ENCODE measurements at regions of chr1 and their contacts with region 1.

Region 1: GRCh38 chr1:223244366-223245103 is 101.5 kb upstream of the TLR5 start:
- DNase-seq: peak; percentile 30
- ATAC-seq: peak; percentile 93
- H3K4me3 ChIP-seq: no peak overlapping the region
- H3K27ac ChIP-seq: no peak overlapping the region
- H3K4me1 ChIP-seq: no peaks in the 10 kb centered on the region
- H3K27me3 ChIP-seq: no peaks in the 10 kb centered on the region; a peak in 1 of 4 replicates
- CTCF ChIP-seq: peak; percentile 46 to 84 (median 59); a peak in 5 of 6 replicates
- EP300 ChIP-seq: peak; percentile 22 to 58; a peak in 2 of 4 replicates
- POLR2A ChIP-seq: no peak
- RAD21 ChIP-seq: peak; percentile 66

Region 2: DNA sequence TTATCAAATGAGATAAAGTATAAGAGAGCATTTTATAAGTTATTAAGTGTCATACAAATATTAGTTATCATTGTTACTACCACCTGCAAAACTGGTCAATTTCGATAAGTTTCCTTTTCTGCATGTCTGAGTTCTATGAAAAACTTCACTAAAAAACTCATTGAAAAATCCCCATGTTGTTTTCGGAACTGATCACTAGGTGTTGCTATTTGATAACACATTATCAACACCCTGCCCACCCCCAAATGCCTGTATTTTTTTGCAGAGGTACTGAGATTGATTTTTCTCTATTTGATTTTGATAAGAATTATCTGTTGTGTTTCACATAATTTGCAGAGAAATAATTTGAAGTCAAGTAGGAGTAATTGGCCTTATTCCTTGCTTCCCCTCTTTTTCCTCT is 451.8 kb before region 1 on chr1:
- CTCF ChIA-PET with region 1: no interaction called
- POLR2A ChIA-PET with region 1: interaction called, 4 read pairs
- RAD21 ChIA-PET with region 1: no interaction called
- SMC1A ChIA-PET with region 1: no interaction called
- in situ Hi-C with region 1: no loop called
- intact Hi-C with region 1: loop called (anchors 5 kb)
- DNase-seq: no peak
- ATAC-seq: 0 out of 3 replicates have a peak, but pooled peaks have one; percentile 29
- H3K4me3 ChIP-seq: no peak overlapping the region
- H3K27ac ChIP-seq: no peak overlapping the region
- H3K4me1 ChIP-seq: no peaks in the 10 kb centered on the region
- H3K27me3 ChIP-seq: no peaks in the 10 kb centered on the region; a peak in 1 of 4 replicates
- CTCF ChIP-seq: peak; percentile 19 to 51 (median 32); a peak in 3 of 6 replicates
- EP300 ChIP-seq: no peak
- POLR2A ChIP-seq: no peak
- RAD21 ChIP-seq: peak; percentile 75

Region 3: GRCh38 chr1:223087291-223088255 is 157.0 kb before region 1 on chr1:
- CTCF ChIA-PET with region 1: interaction called, 11 read pairs
- POLR2A ChIA-PET with region 1: no interaction called
- RAD21 ChIA-PET with region 1: no interaction called
- SMC1A ChIA-PET with region 1: no interaction called
- in situ Hi-C with region 1: no loop called
- intact Hi-C with region 1: loop called (anchors 5 kb)
- DNase-seq: no peak
- ATAC-seq: no peak
- H3K4me3 ChIP-seq: no peak overlapping the region
- H3K27ac ChIP-seq: no peak overlapping the region
- H3K4me1 ChIP-seq: no peaks in the 10 kb centered on the region
- H3K27me3 ChIP-seq: no peaks in the 10 kb centered on the region; a peak in 2 of 4 replicates
- CTCF ChIP-seq: no peak
- EP300 ChIP-seq: no peak
- POLR2A ChIP-seq: no peak
- RAD21 ChIP-seq: no peak

Region 4: DNA sequence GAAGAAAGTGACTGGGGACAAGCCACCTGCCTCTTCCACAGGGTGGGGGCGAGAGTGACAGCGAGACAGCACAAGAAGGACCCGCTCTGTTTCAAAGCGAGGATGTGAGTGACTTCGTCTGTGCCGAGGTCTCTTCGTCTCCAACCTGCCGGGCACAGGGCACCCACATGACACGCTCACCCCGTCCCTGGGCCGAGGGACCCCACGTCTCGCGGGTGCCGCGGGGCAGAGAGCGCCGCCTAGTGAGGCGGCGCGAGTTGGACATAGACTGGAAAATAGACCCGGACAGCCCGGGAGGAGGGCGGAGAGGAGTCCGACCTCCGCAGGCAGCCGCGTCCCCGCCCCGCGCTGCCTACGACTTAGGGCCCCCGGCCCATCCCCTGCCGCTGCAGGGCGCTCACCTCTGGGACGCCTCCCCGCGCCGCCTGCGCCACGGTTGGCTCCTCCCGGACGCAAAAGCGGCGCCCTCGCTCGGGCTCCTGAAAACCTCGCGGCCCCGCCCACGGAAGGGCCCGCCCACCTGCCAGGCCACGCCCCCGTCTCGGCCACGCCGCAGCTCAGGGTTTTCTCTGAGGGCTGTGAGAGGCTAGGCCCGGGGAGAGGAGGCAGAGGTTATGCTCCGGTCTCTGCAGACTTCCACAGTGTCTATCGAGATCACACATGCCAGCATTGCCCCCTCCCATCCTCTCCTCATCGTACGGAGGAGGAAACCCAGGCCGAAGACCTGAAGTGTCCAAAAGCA is 101.6 kb before region 1 on chr1 and contains the start of gene TLR5:
- CTCF ChIA-PET with region 1: interaction called, 406 read pairs
- POLR2A ChIA-PET with region 1: interaction called, 11 read pairs
- RAD21 ChIA-PET with region 1: interaction called, 37 read pairs
- SMC1A ChIA-PET with region 1: interaction called, 218 read pairs
- in situ Hi-C with region 1: loop called (anchors 5 kb)
- intact Hi-C with region 1: loop called (anchors 2 kb)
- DNase-seq: peak; percentile 12
- ATAC-seq: peak; percentile 91
- H3K4me3 ChIP-seq: peak within 1 kb of the TSS; percentile 45
- H3K27ac ChIP-seq: no peak within 1 kb of the TSS
- H3K4me1 ChIP-seq: peaks cover 12% of the 10 kb centered on the region
- H3K27me3 ChIP-seq: no peaks in the 10 kb centered on the region
- CTCF ChIP-seq: peak; percentile 40 to 68 (median 44)
- EP300 ChIP-seq: no peak
- POLR2A ChIP-seq: peak; percentile 52; the same call in 1 of the 2 replicates
- RAD21 ChIP-seq: no peak
- polyA plus RNA-seq, gene TLR5: 0.34 to 0.51 TPM

Region 5: GRCh38 chr1:223175032-223175431 is 69.5 kb before region 1 on chr1:
- CTCF ChIA-PET with region 1: interaction called, 62 read pairs
- POLR2A ChIA-PET with region 1: no interaction called
- RAD21 ChIA-PET with region 1: interaction called, 21 read pairs
- SMC1A ChIA-PET with region 1: interaction called, 31 read pairs
- in situ Hi-C with region 1: no loop called
- intact Hi-C with region 1: loop called (anchors 1 kb)
- DNase-seq: no peak
- ATAC-seq: peak; percentile 85
- H3K4me3 ChIP-seq: no peak overlapping the region
- H3K27ac ChIP-seq: no peak overlapping the region
- H3K4me1 ChIP-seq: no peaks in the 10 kb centered on the region
- H3K27me3 ChIP-seq: no peaks in the 10 kb centered on the region; a peak in 1 of 4 replicates
- CTCF ChIP-seq: peak in 2 of 3 experiments; percentile 7 to 41; a peak in 1 of 6 replicates
- EP300 ChIP-seq: no peak
- POLR2A ChIP-seq: no peak
- RAD21 ChIP-seq: peak; percentile 19; the same call in 1 of the 2 replicates

Region 6: GRCh38 chr1:223189903-223190724 is 54.4 kb before region 1 on chr1:
- CTCF ChIA-PET with region 1: interaction called, 4 read pairs
- POLR2A ChIA-PET with region 1: no interaction called
- RAD21 ChIA-PET with region 1: interaction called, 5 read pairs
- SMC1A ChIA-PET with region 1: interaction called, 17 read pairs
- in situ Hi-C with region 1: no loop called
- intact Hi-C with region 1: loop called (anchors 1 kb)
- DNase-seq: peak; percentile 30
- ATAC-seq: peak; percentile 90
- H3K4me3 ChIP-seq: no peak overlapping the region
- H3K27ac ChIP-seq: no peak overlapping the region
- H3K4me1 ChIP-seq: no peaks in the 10 kb centered on the region; the same call in 1 of the 2 replicates
- H3K27me3 ChIP-seq: no peaks in the 10 kb centered on the region
- CTCF ChIP-seq: no peak
- EP300 ChIP-seq: peak; percentile 77 to 91; a peak in 3 of 4 replicates
- POLR2A ChIP-seq: no peak
- RAD21 ChIP-seq: no peak

Region 7: GRCh38 chr1:223216531-223217205 is 27.9 kb before region 1 on chr1:
- CTCF ChIA-PET with region 1: no interaction called
- POLR2A ChIA-PET with region 1: no interaction called
- RAD21 ChIA-PET with region 1: no interaction called
- SMC1A ChIA-PET with region 1: no interaction called
- in situ Hi-C with region 1: no loop called
- intact Hi-C with region 1: no loop called
- DNase-seq: no peak
- ATAC-seq: no peak; the same call in 2 of the 3 replicates
- H3K4me3 ChIP-seq: no peak overlapping the region
- H3K27ac ChIP-seq: no peak overlapping the region
- H3K4me1 ChIP-seq: no peaks in the 10 kb centered on the region
- H3K27me3 ChIP-seq: no peaks in the 10 kb centered on the region; a peak in 1 of 4 replicates
- CTCF ChIP-seq: no peak
- EP300 ChIP-seq: no peak
- POLR2A ChIP-seq: no peak
- RAD21 ChIP-seq: no peak

Region 8: GRCh38 chr1:223683586-223684487 is 439.3 kb after region 1 on chr1:
- CTCF ChIA-PET with region 1: interaction called, 3 read pairs
- POLR2A ChIA-PET with region 1: no interaction called
- RAD21 ChIA-PET with region 1: no interaction called
- SMC1A ChIA-PET with region 1: no interaction called
- in situ Hi-C with region 1: no loop called
- intact Hi-C with region 1: loop called (anchors 5 kb)
- DNase-seq: no peak
- ATAC-seq: peak; percentile 81
- H3K4me3 ChIP-seq: no peak overlapping the region
- H3K27ac ChIP-seq: no peak overlapping the region
- H3K4me1 ChIP-seq: no peaks in the 10 kb centered on the region
- H3K27me3 ChIP-seq: no peaks in the 10 kb centered on the region; a peak in 2 of 4 replicates
- CTCF ChIP-seq: peak; percentile 53 to 75 (median 67)
- EP300 ChIP-seq: no peak
- POLR2A ChIP-seq: no peak
- RAD21 ChIP-seq: peak; percentile 80

Measured in GM12878 (cell line).